Caco-2 (cell line): ENCODE measurements at regions of chr10 and their contacts with region 1.

Region 1: GRCh38 chr10:58152673-58153263 is 114.9 kb downstream of the IPMK start:
- DNase-seq: peak; percentile 71 to 80
- H3K4me3 ChIP-seq: no peak overlapping the region
- H3K4me3 Mint-ChIP-seq: no peak overlapping the region
- H3K27ac Mint-ChIP-seq: no peak overlapping the region
- H3K4me1 ChIP-seq: no peaks in the 10 kb centered on the region
- H3K4me1 Mint-ChIP-seq: peaks cover 7% of the 10 kb centered on the region
- H3K27me3 ChIP-seq: no peaks in the 10 kb centered on the region
- H3K27me3 Mint-ChIP-seq: peaks cover 15% of the 10 kb centered on the region
- CTCF ChIP-seq: peak; percentile 83 to 85

Region 2: GRCh38 chr10:57338823-57339558 is 813.8 kb before region 1 on chr10:
- CTCF ChIA-PET with region 1: no interaction called
- POLR2A ChIA-PET with region 1: no interaction called
- intact Hi-C with region 1: loop called (anchors 1 kb)
- DNase-seq: peak in 1 of 2 experiments; percentile 64
- H3K4me3 ChIP-seq: no peak overlapping the region
- H3K4me3 Mint-ChIP-seq: no peak overlapping the region
- H3K27ac Mint-ChIP-seq: no peak overlapping the region
- H3K4me1 ChIP-seq: no peaks in the 10 kb centered on the region
- H3K4me1 Mint-ChIP-seq: no peaks in the 10 kb centered on the region
- H3K27me3 ChIP-seq: no peaks in the 10 kb centered on the region
- H3K27me3 Mint-ChIP-seq: no peaks in the 10 kb centered on the region
- CTCF ChIP-seq: peak; percentile 83 to 95

Region 3: DNA sequence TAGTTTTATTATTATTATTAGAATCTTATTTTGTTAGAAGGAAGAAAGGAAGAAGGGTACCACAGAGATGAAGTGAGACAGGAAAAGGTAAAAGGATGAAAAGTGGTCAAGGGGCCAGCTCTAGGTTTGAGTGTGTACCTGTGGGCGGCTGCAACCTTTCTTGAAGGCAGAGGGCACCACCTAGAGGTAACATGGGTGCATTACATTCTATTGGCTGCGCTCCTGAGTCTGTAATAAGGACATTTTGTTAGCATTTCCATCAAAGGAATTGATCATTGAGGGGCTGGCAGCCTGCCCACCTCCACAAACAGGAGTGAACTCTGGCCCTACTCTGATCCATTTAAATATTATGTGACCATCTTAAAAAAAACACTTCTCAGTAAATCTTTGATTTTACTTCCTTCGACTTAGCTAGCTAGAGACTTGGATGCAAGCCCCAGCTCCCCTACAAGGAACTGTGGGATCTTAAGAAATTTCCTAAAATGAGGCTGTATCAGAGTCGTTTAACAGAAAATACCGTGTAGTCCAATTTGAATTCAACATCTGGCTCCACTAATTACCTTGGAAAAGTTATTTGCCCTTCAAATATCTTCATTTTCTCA is 495.5 kb before region 1 on chr10:
- CTCF ChIA-PET with region 1: interaction called, 7 read pairs
- POLR2A ChIA-PET with region 1: no interaction called
- intact Hi-C with region 1: loop called (anchors 1 kb)
- DNase-seq: peak; percentile 75 to 85
- H3K4me3 ChIP-seq: no peak overlapping the region
- H3K4me3 Mint-ChIP-seq: no peak overlapping the region
- H3K27ac Mint-ChIP-seq: no peak overlapping the region
- H3K4me1 ChIP-seq: no peaks in the 10 kb centered on the region
- H3K4me1 Mint-ChIP-seq: no peaks in the 10 kb centered on the region
- H3K27me3 ChIP-seq: no peaks in the 10 kb centered on the region
- H3K27me3 Mint-ChIP-seq: peaks cover 5% of the 10 kb centered on the region
- CTCF ChIP-seq: peak; percentile 97

Region 4: DNA sequence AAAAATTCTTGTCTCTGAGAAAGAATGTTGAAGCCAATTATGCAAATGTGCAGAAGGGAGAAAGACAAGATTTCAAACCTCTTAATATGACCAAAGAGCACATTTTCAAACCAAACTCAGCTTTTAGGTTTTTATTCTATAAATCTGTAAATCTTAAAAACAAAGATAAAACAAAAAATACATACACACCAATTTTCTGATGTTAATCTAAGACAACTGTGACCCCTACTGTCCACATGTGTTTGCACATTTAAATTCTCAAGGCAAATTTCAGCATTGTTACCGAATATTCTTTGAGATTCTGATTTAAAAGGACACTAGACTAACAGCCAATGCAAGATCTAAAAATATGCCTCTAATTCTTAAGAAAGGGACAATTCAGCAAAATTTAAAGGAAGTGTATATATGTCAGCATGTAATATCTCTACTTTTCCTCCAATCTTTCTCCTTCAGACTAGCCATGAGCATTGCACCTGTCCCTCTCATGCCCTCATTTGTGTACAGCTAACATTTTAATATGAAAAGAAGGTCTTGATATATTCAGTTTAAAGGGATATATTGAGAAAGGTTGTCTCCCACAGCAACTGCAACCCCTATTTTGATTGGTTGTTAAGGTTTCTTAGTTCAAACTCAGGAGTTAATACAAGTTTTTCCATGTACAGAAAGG is 302.9 kb before region 1 on chr10:
- CTCF ChIA-PET with region 1: interaction called, 4 read pairs
- POLR2A ChIA-PET with region 1: no interaction called
- intact Hi-C with region 1: loop called (anchors 5 kb)
- DNase-seq: no peak
- H3K4me3 ChIP-seq: no peak overlapping the region
- H3K4me3 Mint-ChIP-seq: no peak overlapping the region
- H3K27ac Mint-ChIP-seq: no peak overlapping the region
- H3K4me1 ChIP-seq: no peaks in the 10 kb centered on the region
- H3K4me1 Mint-ChIP-seq: no peaks in the 10 kb centered on the region
- H3K27me3 ChIP-seq: no peaks in the 10 kb centered on the region
- H3K27me3 Mint-ChIP-seq: no peaks in the 10 kb centered on the region
- CTCF ChIP-seq: peak; percentile 54 to 62

Region 5: GRCh38 chr10:58064714-58065528 is 87.8 kb before region 1 on chr10:
- CTCF ChIA-PET with region 1: interaction called, 6 read pairs
- POLR2A ChIA-PET with region 1: no interaction called
- intact Hi-C with region 1: loop called (anchors 1 kb)
- DNase-seq: peak in 1 of 2 experiments; percentile 75
- H3K4me3 ChIP-seq: no peak overlapping the region
- H3K4me3 Mint-ChIP-seq: no peak overlapping the region
- H3K27ac Mint-ChIP-seq: no peak overlapping the region
- H3K4me1 ChIP-seq: no peaks in the 10 kb centered on the region
- H3K4me1 Mint-ChIP-seq: no peaks in the 10 kb centered on the region
- H3K27me3 ChIP-seq: no peaks in the 10 kb centered on the region; the same call in 1 of the 2 replicates
- H3K27me3 Mint-ChIP-seq: peaks cover 13% of the 10 kb centered on the region
- CTCF ChIP-seq: peak; percentile 93 to 96

Region 6: DNA sequence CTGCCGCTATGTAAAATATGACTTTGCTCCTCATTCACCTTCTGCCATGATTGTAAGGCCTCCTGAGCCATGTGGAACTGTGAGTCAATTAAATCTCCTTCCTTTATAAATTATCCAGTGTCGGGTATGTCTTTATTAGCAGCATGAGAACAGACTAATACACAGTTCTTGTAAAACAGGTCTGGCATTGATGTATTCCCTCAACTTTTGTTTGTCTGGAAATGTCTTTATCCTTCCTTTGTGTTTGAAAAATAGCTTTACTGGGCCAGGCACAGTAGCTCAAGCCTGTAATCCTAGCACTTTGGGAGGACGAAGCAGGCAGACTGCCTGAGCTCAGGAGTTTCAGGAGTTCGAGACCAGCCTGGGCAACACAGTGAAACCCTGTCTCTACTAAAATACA is 100.4 kb after region 1 on chr10:
- CTCF ChIA-PET with region 1: interaction called, 10 read pairs
- POLR2A ChIA-PET with region 1: no interaction called
- intact Hi-C with region 1: no loop called
- DNase-seq: no peak
- H3K4me3 ChIP-seq: no peak overlapping the region
- H3K4me3 Mint-ChIP-seq: no peak overlapping the region
- H3K27ac Mint-ChIP-seq: no peak overlapping the region
- H3K4me1 ChIP-seq: peaks cover 18% of the 10 kb centered on the region
- H3K4me1 Mint-ChIP-seq: peaks cover 19% of the 10 kb centered on the region
- H3K27me3 ChIP-seq: no peaks in the 10 kb centered on the region
- H3K27me3 Mint-ChIP-seq: no peaks in the 10 kb centered on the region
- CTCF ChIP-seq: no peak

Region 7: GRCh38 chr10:58372607-58373441 is 220.1 kb after region 1 on chr10:
- CTCF ChIA-PET with region 1: no interaction called
- POLR2A ChIA-PET with region 1: no interaction called
- intact Hi-C with region 1: no loop called
- DNase-seq: no peak
- H3K4me3 ChIP-seq: no peak overlapping the region
- H3K4me3 Mint-ChIP-seq: no peak overlapping the region
- H3K27ac Mint-ChIP-seq: no peak overlapping the region
- H3K4me1 ChIP-seq: no peaks in the 10 kb centered on the region
- H3K4me1 Mint-ChIP-seq: no peaks in the 10 kb centered on the region
- H3K27me3 ChIP-seq: no peaks in the 10 kb centered on the region
- H3K27me3 Mint-ChIP-seq: no peaks in the 10 kb centered on the region
- CTCF ChIP-seq: no peak